Activated B cell treated with CpG ODN at 0.5 μM for 24 hours (primary cell): ENCODE measurements at regions of chr20 and their contacts with region 1.

Region 1: DNA sequence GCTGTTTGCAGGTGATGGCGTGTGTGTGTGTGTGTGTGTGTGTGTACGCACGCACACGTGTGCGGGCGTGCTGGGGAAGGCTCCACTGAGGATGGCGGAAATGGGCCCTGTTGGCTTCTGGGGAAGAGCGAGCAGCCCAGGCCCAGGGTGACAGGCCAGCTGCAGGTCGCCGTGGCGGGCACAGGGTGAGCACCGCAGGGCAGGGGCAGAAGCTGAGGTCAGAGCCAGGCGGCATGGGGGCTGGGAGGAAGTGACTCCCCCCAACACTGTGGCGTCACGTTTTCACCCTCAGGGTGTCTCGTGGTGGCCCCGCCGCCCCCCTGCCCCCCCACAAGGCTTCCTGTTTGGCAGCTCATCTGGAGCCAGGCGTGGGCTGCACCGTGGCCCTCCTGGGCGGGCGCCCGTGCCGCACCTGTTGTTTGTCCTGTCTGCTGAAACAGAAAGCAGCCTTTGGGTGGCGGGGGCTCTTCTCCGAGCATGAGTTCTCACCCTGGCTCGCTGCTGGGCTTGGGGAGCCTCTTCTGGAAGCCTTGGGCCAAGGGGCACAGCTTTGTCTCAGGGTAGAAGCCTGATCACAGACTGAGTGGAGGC is 7.1 kb downstream of the RBM38 start:
- DNase-seq: peak; percentile 78
- ATAC-seq: peak; percentile 64
- H3K4me3 Mint-ChIP-seq: peak overlapping the region; percentile 78
- H3K27ac Mint-ChIP-seq: peak overlapping the region; percentile 97
- H3K4me1 Mint-ChIP-seq: peaks cover 100% of the 10 kb centered on the region
- H3K27me3 Mint-ChIP-seq: no peaks in the 10 kb centered on the region
- CTCF ChIP-seq: no peak

Region 2: DNA sequence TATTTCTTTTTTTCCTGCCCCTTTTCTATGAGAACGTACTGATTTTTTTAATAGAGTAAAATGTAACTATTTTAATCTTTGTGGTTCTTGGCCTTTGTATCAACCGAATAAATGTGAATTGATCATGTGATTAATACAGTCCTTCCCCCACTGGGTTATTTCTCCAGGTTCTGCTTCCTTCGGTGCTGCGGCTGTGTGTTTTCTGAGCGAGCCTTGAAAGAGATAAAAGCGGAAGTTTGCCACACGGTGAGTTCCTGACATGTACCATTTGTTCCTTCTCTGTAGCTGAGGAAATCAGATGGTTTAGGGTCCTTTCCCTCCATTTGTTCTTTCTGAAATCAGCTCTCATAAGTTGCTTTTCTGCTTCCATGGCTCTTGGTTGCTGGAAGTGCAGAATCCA is 914.4 kb before region 1 on chr20:
- CTCF ChIA-PET with region 1: no interaction called
- POLR2A ChIA-PET with region 1: no interaction called
- intact Hi-C with region 1: no loop called
- DNase-seq: no peak
- ATAC-seq: peak; percentile 57
- H3K4me3 Mint-ChIP-seq: peak overlapping the region; percentile 66
- H3K27ac Mint-ChIP-seq: peak overlapping the region; percentile 84
- H3K4me1 Mint-ChIP-seq: peaks cover 20% of the 10 kb centered on the region
- H3K27me3 Mint-ChIP-seq: no peaks in the 10 kb centered on the region
- CTCF ChIP-seq: no peak

Region 3: GRCh38 chr20:57383447-57384347 is 14.6 kb before region 1 on chr20:
- CTCF ChIA-PET with region 1: interaction called, 33 read pairs
- POLR2A ChIA-PET with region 1: interaction called, 244 read pairs
- intact Hi-C with region 1: no loop called
- DNase-seq: no peak
- ATAC-seq: no peak
- H3K4me3 Mint-ChIP-seq: no peak overlapping the region
- H3K27ac Mint-ChIP-seq: no peak overlapping the region
- H3K4me1 Mint-ChIP-seq: peaks cover 17% of the 10 kb centered on the region
- H3K27me3 Mint-ChIP-seq: no peaks in the 10 kb centered on the region
- CTCF ChIP-seq: no peak

Region 4: DNA sequence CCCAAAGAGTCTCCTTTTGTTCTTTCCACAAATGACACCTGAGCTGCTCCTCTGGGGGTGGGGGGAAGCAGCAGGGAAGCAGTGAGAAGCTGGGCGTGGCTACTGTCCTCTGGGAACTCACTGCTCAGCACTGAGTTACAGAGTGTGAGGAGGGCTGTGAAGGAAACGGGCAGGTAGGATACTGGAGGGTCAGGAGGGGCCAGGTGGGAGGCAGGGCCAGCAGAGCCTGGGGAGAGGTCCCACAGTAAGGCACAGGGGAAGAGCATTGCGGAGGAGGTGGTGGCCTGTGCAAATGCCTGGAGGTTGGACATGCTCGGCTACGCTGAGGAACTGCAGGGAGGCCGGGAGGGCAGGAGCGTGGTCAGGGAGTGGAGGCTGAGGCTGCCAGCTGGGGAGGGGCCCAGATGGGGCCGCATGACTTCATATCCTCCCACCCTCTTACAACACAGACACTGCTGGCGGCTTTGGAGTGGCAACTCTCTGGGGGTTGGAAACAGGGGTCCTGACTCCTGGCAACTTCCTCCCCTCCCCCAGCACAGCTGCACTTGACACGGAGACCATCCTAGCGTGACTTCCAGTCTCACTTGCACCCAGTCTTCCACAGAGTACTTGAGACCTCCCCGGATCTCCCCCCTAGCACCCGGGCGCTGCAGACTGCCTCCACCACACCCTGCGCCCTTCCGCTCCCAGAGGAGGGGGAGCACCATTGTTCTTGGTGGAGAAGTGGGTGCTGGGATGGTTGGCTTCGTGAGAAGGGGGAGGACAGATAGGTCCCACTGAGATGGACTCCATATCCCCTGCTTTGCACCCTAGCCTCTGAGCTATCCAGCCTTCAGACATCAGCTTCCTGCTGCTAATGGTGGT is 27.1 kb after region 1 on chr20:
- CTCF ChIA-PET with region 1: no interaction called
- POLR2A ChIA-PET with region 1: interaction called, 112 read pairs
- intact Hi-C with region 1: no loop called
- DNase-seq: no peak
- ATAC-seq: peak; percentile 41
- H3K4me3 Mint-ChIP-seq: peak overlapping the region; percentile 64
- H3K27ac Mint-ChIP-seq: peak overlapping the region; percentile 54
- H3K4me1 Mint-ChIP-seq: peaks cover 64% of the 10 kb centered on the region
- H3K27me3 Mint-ChIP-seq: no peaks in the 10 kb centered on the region
- CTCF ChIP-seq: no peak

Region 5: GRCh38 chr20:57450419-57450818 is 52.1 kb after region 1 on chr20:
- CTCF ChIA-PET with region 1: no interaction called
- POLR2A ChIA-PET with region 1: interaction called, 10 read pairs
- intact Hi-C with region 1: loop called (anchors 1 kb)
- DNase-seq: peak; percentile 32
- ATAC-seq: peak; percentile 78
- H3K4me3 Mint-ChIP-seq: peak overlapping the region; percentile 69
- H3K27ac Mint-ChIP-seq: peak overlapping the region; percentile 63
- H3K4me1 Mint-ChIP-seq: peaks cover 65% of the 10 kb centered on the region
- H3K27me3 Mint-ChIP-seq: no peaks in the 10 kb centered on the region
- CTCF ChIP-seq: no peak

Region 6: GRCh38 chr20:57480444-57481160 is 82.3 kb after region 1 on chr20:
- CTCF ChIA-PET with region 1: interaction called, 8 read pairs
- POLR2A ChIA-PET with region 1: interaction called, 100 read pairs
- intact Hi-C with region 1: loop called (anchors 1 kb)
- DNase-seq: peak; percentile 64
- ATAC-seq: peak; percentile 69
- H3K4me3 Mint-ChIP-seq: peak overlapping the region; percentile 73
- H3K27ac Mint-ChIP-seq: peak overlapping the region; percentile 81
- H3K4me1 Mint-ChIP-seq: peaks cover 82% of the 10 kb centered on the region
- H3K27me3 Mint-ChIP-seq: no peaks in the 10 kb centered on the region
- CTCF ChIP-seq: no peak